Activated T-helper 2 cell treated with anti-CD3 and anti-CD28 coated beads, Interferon-gamma antibody, Interleukin-2, Interleukin-4, amounts not matched to agents 10 μg/mL and 5 μg/mL and 100 μg/mL, durations not matched to agents 14 hours and 24 hours and 36 hours (primary cell): ENCODE measurements at regions of chr3 and their contacts with region 1.

Region 1: GRCh38 chr3:125141596-125142419 is 70.7 kb downstream of the SLC12A8 start:
- DNase-seq: peak; percentile 72
- H3K4me3 Mint-ChIP-seq: peak overlapping the region; percentile 74
- H3K27ac Mint-ChIP-seq: peak overlapping the region; percentile 89
- H3K4me1 Mint-ChIP-seq: peaks cover 51% of the 10 kb centered on the region
- H3K27me3 Mint-ChIP-seq: peaks cover 55% of the 10 kb centered on the region

Region 2: GRCh38 chr3:124907957-124908356 is 233.9 kb before region 1 on chr3:
- intact Hi-C with region 1: no loop called
- DNase-seq: no peak
- H3K4me3 Mint-ChIP-seq: no peak overlapping the region
- H3K27ac Mint-ChIP-seq: no peak overlapping the region
- H3K4me1 Mint-ChIP-seq: no peaks in the 10 kb centered on the region
- H3K27me3 Mint-ChIP-seq: peaks cover 21% of the 10 kb centered on the region

Region 3: GRCh38 chr3:124951511-124952281 is 190.1 kb before region 1 on chr3:
- intact Hi-C with region 1: no loop called
- DNase-seq: no peak
- H3K4me3 Mint-ChIP-seq: no peak overlapping the region
- H3K27ac Mint-ChIP-seq: no peak overlapping the region
- H3K4me1 Mint-ChIP-seq: no peaks in the 10 kb centered on the region
- H3K27me3 Mint-ChIP-seq: peaks cover 27% of the 10 kb centered on the region

Region 4: DNA sequence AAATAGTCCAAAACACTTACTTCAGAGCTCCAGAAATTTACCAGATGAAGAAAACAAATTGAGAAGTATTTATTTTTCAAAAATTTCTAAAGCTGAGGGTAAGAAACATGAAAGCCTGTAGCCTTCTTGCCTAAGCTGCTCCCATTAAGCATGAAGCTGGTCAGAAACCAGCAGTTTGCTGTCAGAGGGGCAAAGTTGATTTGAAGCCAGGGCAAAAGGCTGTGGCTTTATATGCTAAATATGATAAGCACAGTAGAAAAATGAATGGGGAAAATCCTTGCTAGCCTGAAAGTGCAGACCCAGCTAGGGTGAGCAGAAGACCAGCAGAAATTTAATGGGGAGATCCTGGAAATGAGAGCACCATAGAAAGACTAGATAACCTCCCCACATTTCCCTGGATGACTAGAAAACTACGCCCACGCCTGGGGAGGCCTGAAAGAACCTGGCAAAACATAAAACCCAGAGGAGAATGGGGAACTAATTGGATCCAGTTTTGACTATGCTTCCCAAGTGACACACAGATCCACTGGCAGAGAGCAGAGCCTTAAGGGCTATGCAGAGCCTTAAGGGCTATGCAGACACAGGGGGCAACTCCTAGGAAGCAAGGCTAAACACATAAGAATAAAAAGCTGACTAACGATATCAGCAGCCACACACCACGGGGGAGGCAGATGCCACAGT is 43.1 kb before region 1 on chr3:
- intact Hi-C with region 1: no loop called
- DNase-seq: no peak
- H3K4me3 Mint-ChIP-seq: no peak overlapping the region
- H3K27ac Mint-ChIP-seq: no peak overlapping the region
- H3K4me1 Mint-ChIP-seq: no peaks in the 10 kb centered on the region
- H3K27me3 Mint-ChIP-seq: peaks cover 22% of the 10 kb centered on the region

Region 5: DNA sequence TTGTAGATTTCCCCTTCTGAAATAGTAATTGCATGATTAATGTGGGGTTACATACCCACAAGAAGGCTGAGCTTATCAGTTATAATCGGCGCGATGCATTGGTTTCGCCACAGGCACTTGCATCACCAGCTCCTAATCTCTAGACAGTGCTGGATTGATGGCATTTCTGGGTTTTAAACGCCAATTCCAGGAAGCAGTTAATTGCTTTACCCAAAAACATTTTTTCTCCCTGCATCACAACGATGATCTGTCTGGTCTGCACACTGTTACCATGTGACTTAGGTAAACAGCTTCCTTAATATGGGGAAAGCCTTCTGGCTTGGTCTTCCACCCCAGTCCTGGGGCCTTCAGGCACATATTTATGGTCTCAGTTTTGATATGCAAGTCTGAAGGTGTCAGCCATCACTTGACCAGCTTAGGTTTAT is 16.0 kb before region 1 on chr3:
- intact Hi-C with region 1: loop called (anchors 1 kb)
- DNase-seq: peak; percentile 42
- H3K4me3 Mint-ChIP-seq: no peak overlapping the region
- H3K27ac Mint-ChIP-seq: peak overlapping the region; percentile 64
- H3K4me1 Mint-ChIP-seq: peaks cover 60% of the 10 kb centered on the region
- H3K27me3 Mint-ChIP-seq: peaks cover 16% of the 10 kb centered on the region

Region 6: GRCh38 chr3:125967138-125967537 is 825.3 kb after region 1 on chr3:
- intact Hi-C with region 1: no loop called
- DNase-seq: no peak
- H3K4me3 Mint-ChIP-seq: no peak overlapping the region
- H3K27ac Mint-ChIP-seq: no peak overlapping the region
- H3K4me1 Mint-ChIP-seq: peaks cover 3% of the 10 kb centered on the region
- H3K27me3 Mint-ChIP-seq: peaks cover 17% of the 10 kb centered on the region